ENCODE measurements at regions of chr7 and their contacts with region 1.

Region 1: DNA sequence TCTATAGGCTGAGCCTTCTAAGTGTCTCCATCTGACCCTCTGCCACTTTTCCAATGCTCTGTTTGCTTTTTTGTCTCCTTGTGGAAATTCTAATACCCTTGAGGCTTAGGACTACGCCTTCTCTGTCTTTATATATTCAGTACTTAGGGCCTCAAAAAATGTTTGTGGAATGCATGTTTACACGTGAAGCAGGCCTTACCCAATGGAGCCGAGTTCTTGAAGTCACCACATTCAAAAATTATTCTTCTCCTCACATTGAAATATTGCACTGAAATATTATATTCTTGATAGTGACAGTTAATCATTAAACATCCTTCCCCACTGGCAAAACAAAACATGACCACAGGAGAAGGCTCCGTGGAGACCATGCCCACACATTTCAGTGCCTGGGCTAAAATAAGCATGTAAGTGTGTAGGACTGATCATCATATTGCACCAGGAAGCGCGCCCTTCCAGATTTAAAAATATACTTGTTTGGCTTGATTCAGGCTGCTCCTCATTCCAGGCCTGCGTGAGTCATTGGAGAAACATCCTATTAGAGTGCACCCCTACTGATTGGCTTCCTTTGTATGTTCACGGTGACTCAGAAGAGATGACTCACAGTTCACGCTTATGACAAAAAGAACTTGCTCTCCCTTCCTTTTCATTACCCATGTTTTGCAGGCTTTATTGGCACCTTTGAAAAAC is 307.4 kb upstream of the AOAH start:
- DNase-seq: peak; percentile 68 to 95
- H3K4me3 ChIP-seq: no peak overlapping the region
- H3K27ac ChIP-seq: peak overlapping the region; percentile 80 to 84
- H3K4me1 ChIP-seq: peaks cover 3 to 19% of the 10 kb centered on the region in 2 donors
- H3K27me3 ChIP-seq: no peaks in the 10 kb centered on the region
- CTCF ChIP-seq: no peak

Region 2: DNA sequence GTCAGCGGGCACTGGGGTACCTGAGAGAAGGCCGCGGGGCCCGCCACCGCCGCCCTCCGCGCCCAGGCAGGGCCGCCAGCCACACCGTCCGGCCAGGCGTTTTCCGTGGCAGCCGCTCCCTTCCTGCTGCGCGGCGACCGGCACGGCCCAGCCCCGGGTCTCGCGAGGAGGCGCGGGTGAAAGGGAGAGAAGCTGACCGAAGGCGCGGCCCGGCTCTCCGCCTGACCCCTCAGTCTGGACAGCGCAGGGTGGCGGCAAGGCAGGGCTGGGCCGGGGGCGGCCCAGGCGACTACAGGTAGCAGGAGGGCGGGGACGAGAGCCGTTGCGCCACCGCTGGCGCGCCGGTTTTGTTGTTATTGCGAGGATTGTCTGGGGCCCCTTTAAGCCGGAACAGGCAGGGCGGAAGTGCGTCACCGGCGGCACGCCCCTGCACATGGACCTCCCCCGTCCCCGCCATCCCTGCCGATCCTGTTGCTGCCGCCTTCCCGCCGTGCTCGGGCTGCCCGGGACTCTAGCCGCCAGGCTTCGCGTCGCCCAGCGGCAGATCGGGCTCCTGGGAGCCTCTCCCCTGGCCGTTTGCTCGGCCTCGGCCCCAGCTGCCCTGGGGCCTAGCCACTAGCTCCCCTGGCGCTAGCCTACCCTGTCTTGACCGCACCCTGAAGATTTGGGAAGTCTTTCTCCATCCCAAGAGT is 1336.8 kb before region 1 on chr7 and contains the start of gene HERPUD2:
- intact Hi-C with region 1: loop called (anchors 5 kb)
- DNase-seq: peak; percentile 76 to 95
- H3K4me3 ChIP-seq: peak within 1 kb of the TSS; percentile 81 to 86
- H3K27ac ChIP-seq: peak within 1 kb of the TSS; percentile 93 to 97
- H3K4me1 ChIP-seq: peaks cover 3 to 21% of the 10 kb centered on the region in 2 donors
- H3K27me3 ChIP-seq: no peaks in the 10 kb centered on the region
- CTCF ChIP-seq: no peak
- total RNA-seq, gene HERPUD2: 69.8 TPM

Region 3: DNA sequence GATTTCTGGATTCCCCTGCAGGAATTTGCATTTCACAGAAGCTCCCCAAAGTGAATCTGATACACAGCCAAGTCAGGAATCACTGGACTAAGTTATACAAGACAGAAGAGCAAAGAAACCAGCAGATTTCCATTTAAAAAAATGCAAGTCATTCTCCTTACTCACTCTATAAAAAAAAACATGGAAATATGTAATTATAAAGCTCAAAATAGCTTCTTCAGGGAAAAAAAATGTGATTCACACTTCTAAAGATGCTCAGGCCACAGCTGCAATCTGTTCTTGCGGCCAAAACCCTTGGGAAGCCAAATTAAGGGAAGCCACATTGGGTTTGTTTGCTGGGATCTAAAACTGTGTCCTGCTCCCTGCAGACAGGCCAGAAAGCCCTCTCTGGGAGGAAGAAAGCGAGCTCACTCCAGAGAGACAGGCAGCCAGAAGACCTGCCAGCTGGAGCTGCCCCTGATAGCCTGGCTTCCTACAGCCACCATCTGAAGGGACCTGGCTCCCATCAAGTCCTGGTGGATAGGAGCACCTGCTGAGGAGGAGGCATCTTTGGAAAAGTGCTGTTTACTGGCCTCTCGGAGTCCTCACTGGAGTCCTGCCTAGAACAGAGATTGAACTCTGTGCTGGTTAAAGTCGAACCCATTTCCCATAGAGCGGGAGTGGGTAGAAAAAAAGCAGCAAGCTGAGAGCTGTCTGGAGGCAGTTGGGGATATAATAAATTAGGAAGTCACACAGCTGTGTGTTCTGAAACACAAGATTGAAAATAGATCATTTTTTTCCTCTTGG is 51.8 kb after region 1 on chr7:
- intact Hi-C with region 1: loop called (anchors 2 kb)
- DNase-seq: no peak
- H3K4me3 ChIP-seq: no peak overlapping the region
- H3K27ac ChIP-seq: peak overlapping the region; percentile 42 to 67
- H3K4me1 ChIP-seq: peaks cover 0 to 10% of the 10 kb centered on the region in 2 donors
- H3K27me3 ChIP-seq: no peaks in the 10 kb centered on the region
- CTCF ChIP-seq: no peak